MCF 10A (cell line): ENCODE measurements at regions of chr18 and their contacts with region 1.

Region 1: DNA sequence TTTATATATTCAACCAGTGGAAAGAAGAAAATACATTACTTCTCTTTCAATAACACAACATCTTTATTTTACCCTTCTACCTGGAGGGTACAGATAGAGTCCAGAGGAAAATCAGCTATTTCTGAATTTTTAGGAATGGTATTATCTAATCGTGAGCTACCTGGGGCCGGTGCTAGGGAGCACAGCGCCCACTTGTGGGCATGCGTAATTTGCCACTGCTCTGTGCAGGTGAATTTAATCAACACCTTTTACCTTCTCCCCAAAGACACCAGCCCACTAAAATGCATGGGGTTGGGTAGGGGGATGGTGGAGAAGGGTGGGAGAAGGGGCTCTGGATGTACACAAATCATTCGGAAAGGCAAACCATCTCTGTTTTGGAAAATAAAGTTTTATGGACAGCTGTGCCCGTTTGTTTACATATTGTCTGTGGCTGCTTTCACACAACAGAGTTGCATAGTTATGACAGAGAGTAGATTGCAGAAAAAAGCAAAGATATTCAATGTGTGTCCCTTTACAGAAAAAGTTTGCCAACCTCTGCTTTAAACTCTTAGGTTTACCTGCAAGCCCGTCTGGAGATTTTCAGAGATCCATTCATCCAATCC is 51.5 kb upstream of the DCC start:
- DNase-seq: peak; percentile 49
- H3K4me3 Mint-ChIP-seq: no peak overlapping the region
- H3K27ac Mint-ChIP-seq: no peak overlapping the region
- H3K4me1 Mint-ChIP-seq: no peaks in the 10 kb centered on the region
- H3K27me3 Mint-ChIP-seq: no peaks in the 10 kb centered on the region
- CTCF ChIP-seq: peak; percentile 86

Region 2: GRCh38 chr18:51621113-51621863 is 667.2 kb before region 1 on chr18:
- CTCF ChIA-PET with region 1: interaction called, 7 read pairs
- POLR2A ChIA-PET with region 1: no interaction called
- intact Hi-C with region 1: loop called (anchors 1 kb)
- DNase-seq: peak; percentile 74
- H3K4me3 Mint-ChIP-seq: no peak overlapping the region
- H3K27ac Mint-ChIP-seq: no peak overlapping the region
- H3K4me1 Mint-ChIP-seq: peaks cover 24% of the 10 kb centered on the region
- H3K27me3 Mint-ChIP-seq: no peaks in the 10 kb centered on the region
- CTCF ChIP-seq: peak; percentile 89

Region 3: GRCh38 chr18:51687845-51688585 is 600.5 kb before region 1 on chr18:
- CTCF ChIA-PET with region 1: interaction called, 5 read pairs
- POLR2A ChIA-PET with region 1: no interaction called
- intact Hi-C with region 1: loop called (anchors 5 kb)
- DNase-seq: no peak
- H3K4me3 Mint-ChIP-seq: no peak overlapping the region
- H3K27ac Mint-ChIP-seq: no peak overlapping the region
- H3K4me1 Mint-ChIP-seq: no peaks in the 10 kb centered on the region
- H3K27me3 Mint-ChIP-seq: peaks cover 56% of the 10 kb centered on the region
- CTCF ChIP-seq: no peak

Region 4: GRCh38 chr18:52190631-52191030 is 97.9 kb before region 1 on chr18:
- CTCF ChIA-PET with region 1: no interaction called
- POLR2A ChIA-PET with region 1: no interaction called
- intact Hi-C with region 1: no loop called
- DNase-seq: no peak
- H3K4me3 Mint-ChIP-seq: no peak overlapping the region
- H3K27ac Mint-ChIP-seq: no peak overlapping the region
- H3K4me1 Mint-ChIP-seq: peaks cover 6% of the 10 kb centered on the region
- H3K27me3 Mint-ChIP-seq: no peaks in the 10 kb centered on the region
- CTCF ChIP-seq: no peak